ENCODE measurements at regions of chr19 and their contacts with region 1.

Region 1: GRCh38 chr19:4267101-4267900 is 11.8 kb upstream of the SHD start:
- DNase-seq: no peak
- H3K4me3 ChIP-seq: no peak overlapping the region
- H3K27ac ChIP-seq: no peak overlapping the region
- H3K4me1 ChIP-seq: peaks cover 0 to 6% (median 2%) of the 10 kb centered on the region in 4 donors
- H3K27me3 ChIP-seq: no peaks in the 10 kb centered on the region
- CTCF ChIP-seq: peak; percentile 76 to 86 (median 83)
- EP300 ChIP-seq: no peak
- POLR2A ChIP-seq: no peak

Region 2: DNA sequence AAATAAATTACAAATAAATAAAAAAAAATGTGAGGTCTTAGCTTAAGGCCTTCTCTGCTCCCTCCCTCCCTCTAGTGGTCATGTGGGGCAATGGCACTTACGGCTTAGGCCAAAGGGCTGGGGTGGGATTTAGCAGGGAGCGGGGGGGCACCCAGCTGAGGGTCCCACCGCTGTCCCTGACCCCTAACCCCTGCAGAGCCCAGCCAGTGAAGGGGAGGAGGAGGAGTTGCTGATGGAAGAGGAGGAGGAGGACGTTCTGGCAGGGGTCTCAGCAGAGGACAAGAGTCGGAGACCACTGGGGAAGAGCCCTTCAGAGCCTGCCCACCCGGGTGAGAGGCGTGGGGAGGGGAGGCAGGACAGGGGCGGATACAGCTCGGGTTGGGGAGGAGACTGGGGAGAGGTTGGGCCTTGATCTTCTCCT is 85.4 kb after region 1 on chr19:
- intact Hi-C with region 1: loop called (anchors 2 kb)
- DNase-seq: no peak
- H3K4me3 ChIP-seq: no peak overlapping the region
- H3K27ac ChIP-seq: peak overlapping the region in 1 of 4 donors; percentile 1
- H3K4me1 ChIP-seq: peaks cover 0 to 5% (median 0%) of the 10 kb centered on the region in 4 donors
- H3K27me3 ChIP-seq: no peaks in the 10 kb centered on the region
- CTCF ChIP-seq: peak; percentile 40 to 94 (median 60)
- EP300 ChIP-seq: no peak
- POLR2A ChIP-seq: no peak

Region 3: GRCh38 chr19:4524808-4525562 is 257.7 kb after region 1 on chr19:
- intact Hi-C with region 1: loop called (anchors 5 kb)
- DNase-seq: no peak
- H3K4me3 ChIP-seq: no peak overlapping the region
- H3K27ac ChIP-seq: no peak overlapping the region
- H3K4me1 ChIP-seq: peaks cover 2 to 16% (median 6%) of the 10 kb centered on the region in 4 donors
- H3K27me3 ChIP-seq: no peaks in the 10 kb centered on the region
- CTCF ChIP-seq: peak; percentile 63 to 88 (median 64)
- EP300 ChIP-seq: no peak
- POLR2A ChIP-seq: no peak

Measured in esophagus muscularis mucosa (tissue), 4 donors.